ENCODE measurements at regions of chr3 and their contacts with region 1.

Region 1: GRCh38 chr3:160565442-160566403 is at the start of gene KPNA4:
- DNase-seq: peak; percentile 98 to 99 (median 98)
- ATAC-seq: peak; percentile 97 to 98 (median 98)
- H3K4me3 ChIP-seq: peak within 1 kb of the TSS; percentile 69 to 94 (median 85)
- H3K27ac ChIP-seq: peak within 1 kb of the TSS; percentile 93 to 99 (median 98)
- H3K4me1 ChIP-seq: peaks cover 6 to 51% (median 42%) of the 10 kb centered on the region in 12 donors
- H3K27me3 ChIP-seq: no peaks in the 10 kb centered on the region
- CTCF ChIP-seq: no peak
- POLR2A ChIP-seq: peak in 1 of 2 donors; percentile 76
- total RNA-seq, gene KPNA4: 51.2 to 198 (median 133) TPM

Region 2: GRCh38 chr3:159472611-159473010 is 1093.1 kb before region 1 on chr3:
- intact Hi-C with region 1: no loop called
- DNase-seq: no peak
- ATAC-seq: no peak
- H3K4me3 ChIP-seq: no peak overlapping the region
- H3K27ac ChIP-seq: no peak overlapping the region
- H3K4me1 ChIP-seq: no peaks in the 10 kb centered on the region
- H3K27me3 ChIP-seq: no peaks in the 10 kb centered on the region
- CTCF ChIP-seq: no peak
- POLR2A ChIP-seq: no peak

Region 3: GRCh38 chr3:160399125-160400029 is 166.3 kb before region 1 on chr3 and contains the starts of genes IFT80 and SMC4:
- intact Hi-C with region 1: loop called in 2 of 10 experiments (anchors 1 to 5 kb)
- DNase-seq: peak; percentile 96 to 98 (median 97)
- ATAC-seq: peak; percentile 99
- H3K4me3 ChIP-seq: peak within 1 kb of the TSS; percentile 47 to 90 (median 74)
- H3K27ac ChIP-seq: peak within 1 kb of the TSS; percentile 72 to 93 (median 86)
- H3K4me1 ChIP-seq: peaks cover 0 to 34% (median 17%) of the 10 kb centered on the region in 12 donors
- H3K27me3 ChIP-seq: no peaks in the 10 kb centered on the region
- CTCF ChIP-seq: no peak
- POLR2A ChIP-seq: peak in 1 of 2 donors; percentile 47
- total RNA-seq, gene IFT80: 6.8 to 18.6 (median 10.6) TPM
- total RNA-seq, gene SMC4: 15.1 to 27.3 (median 18.4) TPM

Region 4: GRCh38 chr3:160486459-160486869 is 79.3 kb before region 1 on chr3:
- intact Hi-C with region 1: no loop called
- DNase-seq: no peak
- ATAC-seq: no peak
- H3K4me3 ChIP-seq: peak overlapping the region in 1 of 12 donors; percentile 45
- H3K27ac ChIP-seq: no peak overlapping the region
- H3K4me1 ChIP-seq: peaks cover 0 to 7% (median 0%) of the 10 kb centered on the region in 12 donors
- H3K27me3 ChIP-seq: no peaks in the 10 kb centered on the region
- CTCF ChIP-seq: peak; percentile 46 to 73 (median 65)
- POLR2A ChIP-seq: no peak

Region 5: GRCh38 chr3:160501325-160501724 is 64.4 kb before region 1 on chr3:
- intact Hi-C with region 1: no loop called
- DNase-seq: no peak
- ATAC-seq: no peak
- H3K4me3 ChIP-seq: no peak overlapping the region
- H3K27ac ChIP-seq: no peak overlapping the region
- H3K4me1 ChIP-seq: no peaks in the 10 kb centered on the region
- H3K27me3 ChIP-seq: no peaks in the 10 kb centered on the region
- CTCF ChIP-seq: no peak
- POLR2A ChIP-seq: no peak